ENCODE measurements at regions of chr2 and their contacts with region 1.

Region 1: GRCh38 chr2:28594289-28595108 is 98.6 kb downstream of the PLB1 start:
- DNase-seq: peak; percentile 96
- H3K4me3 Mint-ChIP-seq: peak overlapping the region; percentile 54
- H3K27ac Mint-ChIP-seq: peak overlapping the region; percentile 82
- H3K4me1 Mint-ChIP-seq: peaks cover 14% of the 10 kb centered on the region
- H3K27me3 Mint-ChIP-seq: no peaks in the 10 kb centered on the region

Region 2: GRCh38 chr2:28276076-28276618 is 318.4 kb before region 1 on chr2:
- CTCF ChIA-PET with region 1: no interaction called
- intact Hi-C with region 1: no loop called
- DNase-seq: peak; percentile 56
- H3K4me3 Mint-ChIP-seq: no peak overlapping the region
- H3K27ac Mint-ChIP-seq: peak overlapping the region; percentile 38
- H3K4me1 Mint-ChIP-seq: peaks cover 35% of the 10 kb centered on the region
- H3K27me3 Mint-ChIP-seq: no peaks in the 10 kb centered on the region

Region 3: DNA sequence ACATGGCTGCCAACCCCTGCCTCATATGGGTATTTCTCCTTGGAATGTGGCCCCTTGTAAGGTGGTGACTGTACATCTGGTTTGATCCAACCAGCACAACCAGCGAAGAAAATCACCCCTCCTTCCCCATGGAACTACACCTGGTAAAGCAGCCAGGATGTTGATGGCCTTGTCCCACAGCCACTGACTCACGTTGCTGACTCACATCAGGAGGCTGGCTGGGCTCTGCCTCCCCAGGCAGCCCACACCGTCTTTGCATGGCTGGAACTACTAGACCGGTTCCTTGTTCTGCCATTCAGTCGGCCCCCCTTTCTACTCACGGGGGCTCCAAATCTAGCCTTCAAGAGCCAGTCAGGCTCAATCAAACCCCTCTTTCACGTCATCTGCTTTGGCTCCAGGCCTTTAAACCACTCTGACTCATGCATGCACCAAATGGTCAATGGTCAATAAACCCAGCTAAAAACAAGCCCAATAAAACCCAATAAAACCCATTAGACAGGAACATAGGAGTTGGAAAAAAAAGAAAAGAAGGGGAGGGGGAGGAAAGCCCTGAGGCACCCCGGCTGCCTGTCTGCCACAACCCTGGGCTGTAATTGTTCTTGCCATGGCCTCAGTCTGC is 16.2 kb after region 1 on chr2:
- CTCF ChIA-PET with region 1: interaction called, 32 read pairs
- intact Hi-C with region 1: loop called (anchors 1 kb)
- DNase-seq: peak; percentile 70
- H3K4me3 Mint-ChIP-seq: no peak overlapping the region
- H3K27ac Mint-ChIP-seq: peak overlapping the region; percentile 46
- H3K4me1 Mint-ChIP-seq: peaks cover 25% of the 10 kb centered on the region
- H3K27me3 Mint-ChIP-seq: no peaks in the 10 kb centered on the region

Region 4: DNA sequence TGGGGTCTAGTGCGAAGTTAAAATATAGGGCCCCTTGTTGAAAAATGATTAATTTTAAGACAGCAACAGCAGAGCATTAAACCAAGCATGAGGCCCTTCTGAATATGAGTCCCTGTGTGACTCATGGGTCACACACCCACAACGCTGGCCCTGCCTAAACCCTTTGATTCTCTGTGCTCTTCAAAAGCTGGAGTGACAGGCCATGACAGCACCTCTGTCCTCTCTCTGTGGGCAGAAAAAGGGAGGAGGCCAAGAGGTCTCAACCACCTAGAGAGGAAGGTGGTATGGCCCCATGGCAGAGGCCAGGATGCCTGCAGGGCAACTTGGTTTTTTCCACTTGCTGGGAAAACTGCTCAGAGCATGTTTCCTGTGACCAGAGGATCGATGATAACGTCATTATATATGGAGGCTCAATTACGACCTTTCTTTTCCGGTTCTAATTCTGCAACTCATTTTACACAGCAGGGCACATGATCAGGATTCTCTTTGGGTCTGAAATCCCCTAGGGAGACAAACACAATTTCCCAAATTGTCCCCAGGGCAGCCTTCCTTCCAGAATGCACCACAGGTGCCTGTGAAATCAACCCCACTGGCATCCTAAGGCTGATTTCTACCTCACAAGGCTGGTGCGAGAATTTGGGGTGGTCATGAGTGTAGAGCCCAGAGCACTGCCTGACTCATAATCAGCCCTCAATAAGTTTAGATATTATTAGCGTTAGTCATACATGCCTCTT is 55.1 kb after region 1 on chr2:
- CTCF ChIA-PET with region 1: interaction called, 5 read pairs
- intact Hi-C with region 1: loop called (anchors 2 kb)
- DNase-seq: peak; percentile 69
- H3K4me3 Mint-ChIP-seq: no peak overlapping the region
- H3K27ac Mint-ChIP-seq: no peak overlapping the region
- H3K4me1 Mint-ChIP-seq: peaks cover 23% of the 10 kb centered on the region
- H3K27me3 Mint-ChIP-seq: no peaks in the 10 kb centered on the region

Region 5: DNA sequence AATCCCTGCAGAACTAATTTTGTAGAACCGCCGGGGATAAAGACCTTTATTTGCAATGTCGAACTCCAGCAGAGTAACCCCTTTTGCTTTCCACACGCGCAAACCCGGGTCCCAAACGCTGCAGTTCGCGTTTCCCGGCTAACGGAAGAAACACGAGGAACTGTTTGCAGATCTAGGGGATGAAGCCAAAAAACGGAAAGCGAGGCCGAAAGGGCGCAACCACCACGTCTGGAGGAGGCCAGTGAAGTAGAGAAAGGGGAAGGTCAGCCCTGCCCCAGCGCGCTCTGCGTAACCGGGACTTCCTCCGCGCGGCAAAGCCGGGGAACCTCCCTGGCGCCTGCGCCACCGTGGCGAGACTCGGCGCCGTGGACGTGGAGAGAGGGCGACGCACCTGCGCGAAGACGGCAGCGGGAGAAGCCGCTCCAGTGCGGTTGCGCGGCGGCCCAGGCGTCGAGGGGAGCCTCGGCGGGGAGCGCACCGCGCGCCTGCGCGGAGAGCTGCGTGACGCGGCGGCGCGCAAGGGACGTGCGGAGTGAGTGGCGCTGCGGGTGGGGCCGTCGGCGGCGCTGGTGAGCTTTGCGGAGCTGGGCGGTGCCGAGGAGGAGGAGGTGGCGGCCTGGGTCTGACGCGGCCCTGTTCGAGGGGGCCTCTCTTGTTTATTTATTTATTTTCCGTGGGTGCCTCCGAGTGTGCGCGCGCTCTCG is 156.9 kb after region 1 on chr2 and contains the start of gene PPP1CB:
- CTCF ChIA-PET with region 1: interaction called, 49 read pairs
- intact Hi-C with region 1: loop called (anchors 1 kb)
- DNase-seq: peak; percentile 94
- H3K4me3 Mint-ChIP-seq: peak within 1 kb of the TSS; percentile 91
- H3K27ac Mint-ChIP-seq: peak within 1 kb of the TSS; percentile 95
- H3K4me1 Mint-ChIP-seq: peaks cover 50% of the 10 kb centered on the region
- H3K27me3 Mint-ChIP-seq: no peaks in the 10 kb centered on the region
- total RNA-seq, gene PPP1CB: 235 to 239 TPM

Region 6: DNA sequence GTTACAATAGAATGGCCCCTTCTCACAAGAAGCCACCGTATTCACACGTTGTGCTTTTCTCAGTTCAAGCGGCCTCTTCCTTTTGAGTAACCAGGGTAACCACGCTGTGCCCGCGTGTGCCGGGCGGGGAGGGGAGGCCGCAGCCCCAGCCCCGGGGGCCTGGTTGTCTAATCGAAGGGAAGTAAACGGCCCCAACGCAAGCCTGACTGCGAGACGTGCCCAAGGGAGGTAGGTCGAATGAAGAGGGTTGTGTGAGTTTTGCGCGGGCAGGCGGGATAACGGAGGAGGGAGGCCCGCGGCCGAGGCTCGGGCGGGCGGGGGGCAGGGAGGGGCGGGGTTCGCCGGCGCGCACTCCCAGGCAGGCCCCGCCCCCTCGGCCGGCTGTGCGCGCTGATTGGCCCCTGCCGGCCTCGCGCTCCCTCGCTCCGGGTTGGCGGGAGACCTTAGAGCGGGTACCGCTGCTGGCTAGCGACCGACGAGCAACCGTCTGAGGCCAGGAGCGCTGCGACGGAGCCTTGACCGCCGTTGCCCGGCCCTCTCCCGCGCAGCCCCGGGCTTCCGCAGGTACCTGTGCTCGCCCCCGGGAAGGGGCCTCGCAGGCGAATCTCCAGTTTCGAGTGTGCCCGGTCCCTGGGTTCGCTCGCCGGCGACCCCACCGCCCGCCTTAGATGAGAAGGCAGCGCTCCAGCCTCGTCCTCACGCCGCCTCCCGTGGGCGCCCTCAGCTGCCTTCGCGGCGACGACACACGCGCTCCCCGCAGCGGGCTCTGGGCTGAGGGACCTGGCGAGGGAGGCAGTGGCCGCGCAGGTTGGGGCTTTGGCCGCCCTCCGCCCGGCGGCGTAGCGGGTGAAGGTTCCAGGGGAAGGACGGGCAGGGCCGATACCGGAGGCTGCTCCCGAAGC is 216.1 kb after region 1 on chr2 and contains the start of gene SPDYA:
- CTCF ChIA-PET with region 1: interaction called, 8 read pairs
- intact Hi-C with region 1: loop called (anchors 1 kb)
- DNase-seq: peak; percentile 82
- H3K4me3 Mint-ChIP-seq: peak within 1 kb of the TSS; percentile 75
- H3K27ac Mint-ChIP-seq: no peak within 1 kb of the TSS
- H3K4me1 Mint-ChIP-seq: peaks cover 11% of the 10 kb centered on the region
- H3K27me3 Mint-ChIP-seq: no peaks in the 10 kb centered on the region
- total RNA-seq, gene SPDYA: 1.8 to 2.0 TPM

Region 7: DNA sequence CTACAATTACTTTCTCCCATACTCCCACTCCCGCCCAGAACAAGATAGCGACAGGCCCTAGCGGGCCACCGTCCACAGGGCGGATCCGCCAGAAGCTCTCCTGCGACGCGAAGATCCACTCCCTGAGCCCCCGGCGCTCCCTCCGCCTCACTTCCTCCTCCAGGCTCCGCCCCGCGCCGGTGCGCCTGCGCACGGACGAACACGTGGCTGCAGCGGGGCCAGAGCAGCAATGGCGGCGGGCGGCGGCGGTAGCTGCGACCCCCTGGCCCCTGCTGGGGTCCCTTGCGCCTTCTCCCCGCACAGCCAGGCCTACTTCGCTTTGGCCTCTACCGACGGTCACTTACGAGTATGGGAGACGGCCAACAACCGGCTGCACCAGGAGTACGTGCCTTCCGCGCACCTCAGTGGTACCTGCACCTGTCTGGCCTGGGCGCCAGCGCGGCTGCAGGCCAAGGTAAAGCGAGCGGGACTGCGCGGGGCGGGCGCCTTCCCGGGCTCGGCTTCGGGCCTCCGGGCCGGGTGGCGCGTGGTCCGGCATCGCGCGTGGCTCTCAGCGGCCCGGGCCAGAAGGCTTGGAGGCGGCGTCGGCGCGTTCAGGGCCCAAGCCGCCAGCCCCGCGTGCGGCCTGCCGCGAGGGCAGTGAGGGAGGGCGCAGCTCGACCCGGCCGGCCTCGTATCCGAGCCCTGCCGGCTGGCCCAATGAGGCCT is 300.1 kb after region 1 on chr2 and contains the start of gene WDR43:
- CTCF ChIA-PET with region 1: interaction called, 3 read pairs
- intact Hi-C with region 1: loop called (anchors 5 kb)
- DNase-seq: peak; percentile 97
- H3K4me3 Mint-ChIP-seq: peak within 1 kb of the TSS; percentile 100
- H3K27ac Mint-ChIP-seq: peak within 1 kb of the TSS; percentile 97
- H3K4me1 Mint-ChIP-seq: peaks cover 34% of the 10 kb centered on the region
- H3K27me3 Mint-ChIP-seq: no peaks in the 10 kb centered on the region
- total RNA-seq, gene WDR43: 76.5 to 78.7 TPM

Region 8: GRCh38 chr2:29014811-29015421 is 420.4 kb after region 1 on chr2:
- CTCF ChIA-PET with region 1: no interaction called
- intact Hi-C with region 1: no loop called
- DNase-seq: peak; percentile 83
- H3K4me3 Mint-ChIP-seq: peak overlapping the region; percentile 80
- H3K27ac Mint-ChIP-seq: peak overlapping the region; percentile 90
- H3K4me1 Mint-ChIP-seq: peaks cover 76% of the 10 kb centered on the region
- H3K27me3 Mint-ChIP-seq: no peaks in the 10 kb centered on the region

Measured in activated naive CD4-positive, alpha-beta T cell treated with anti-CD3 and anti-CD28 coated beads for 36 hours (primary cell).